ENCODE measurements at regions of chr6 and their contacts with region 1.

Region 1: GRCh38 chr6:52077180-52077884 is 10.1 kb downstream of the PKHD1 start:
- DNase-seq: peak in 1 of 2 experiments; percentile 59
- H3K4me3 ChIP-seq: peak overlapping the region in 2 of 4 experiments; percentile 27 to 32; a peak in 5 of 8 replicates
- H3K27ac ChIP-seq: 0 out of 2 replicates have a peak overlapping the region, but pooled peaks have one; percentile 34
- H3K4me1 ChIP-seq: peaks cover 2 to 17% (median 14%) of the 10 kb centered on the region in 4 experiments; a peak in 5 of 7 replicates
- H3K27me3 ChIP-seq: no peaks in the 10 kb centered on the region; a peak in 1 of 7 replicates
- CTCF ChIP-seq: no peak
- EP300 ChIP-seq: 0 out of 3 replicates have a peak, but pooled peaks of 1 of the 2 experiments have one; percentile 11
- POLR2A ChIP-seq: no peak
- RAD21 ChIP-seq: no peak; a peak in 1 of 4 replicates

Region 2: DNA sequence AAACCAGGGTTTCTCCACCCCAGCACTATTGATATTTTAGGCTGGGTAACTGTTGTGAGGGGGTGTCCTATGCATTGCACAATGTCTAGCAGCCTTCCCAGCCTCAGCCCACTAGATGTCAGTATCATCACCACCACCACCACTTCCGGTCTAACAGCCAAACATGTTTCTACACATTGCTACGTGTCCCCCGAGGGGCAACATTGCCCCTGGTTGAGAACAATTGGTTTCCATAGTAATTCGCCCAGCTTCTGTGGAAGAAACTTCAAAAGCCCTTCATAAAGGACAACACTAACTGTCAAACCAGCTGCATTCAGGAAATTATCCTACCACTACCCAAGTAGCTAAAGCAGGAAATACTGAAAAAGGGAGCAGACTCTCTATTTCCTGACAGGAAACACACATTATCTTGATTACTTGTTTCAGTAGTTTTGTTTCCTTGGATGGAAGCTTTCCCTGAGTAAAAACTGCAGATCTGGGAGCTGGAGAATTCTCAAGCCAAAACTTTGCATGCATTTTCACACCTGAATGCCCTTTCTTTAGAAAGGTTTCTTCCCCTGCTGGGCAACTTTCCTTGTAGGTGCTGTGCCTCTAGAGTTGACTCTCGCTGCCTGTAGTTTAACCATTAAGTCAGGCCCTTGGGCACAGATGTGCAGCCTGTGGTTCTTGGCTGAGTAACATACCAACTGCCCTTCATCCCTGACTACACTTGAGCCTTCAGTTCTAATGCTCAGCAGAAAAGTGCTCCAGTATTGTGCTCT is 13.6 kb before region 1 on chr6:
- CTCF ChIA-PET with region 1: interaction called, 17 read pairs
- POLR2A ChIA-PET with region 1: interaction called, 3 read pairs
- DNase-seq: peak in 1 of 2 experiments; percentile 15
- H3K4me3 ChIP-seq: no peak overlapping the region
- H3K27ac ChIP-seq: no peak overlapping the region; the same call in 1 of the 2 replicates
- H3K4me1 ChIP-seq: peaks cover 0 to 16% (median 7%) of the 10 kb centered on the region in 4 experiments; a peak in 5 of 7 replicates
- H3K27me3 ChIP-seq: no peaks in the 10 kb centered on the region
- CTCF ChIP-seq: peak; percentile 67 to 76 (median 70)
- EP300 ChIP-seq: no peak
- POLR2A ChIP-seq: no peak
- RAD21 ChIP-seq: peak; percentile 76 to 82

Region 3: GRCh38 chr6:52087498-52087999 is 10.2 kb after region 1 on chr6 and contains the start of gene PKHD1:
- CTCF ChIA-PET with region 1: interaction called, 12 read pairs
- POLR2A ChIA-PET with region 1: no interaction called
- DNase-seq: no peak
- H3K4me3 ChIP-seq: no peak within 1 kb of the TSS
- H3K27ac ChIP-seq: no peak within 1 kb of the TSS
- H3K4me1 ChIP-seq: no peaks in the 10 kb centered on the region
- H3K27me3 ChIP-seq: no peaks in the 10 kb centered on the region
- CTCF ChIP-seq: peak in 2 of 3 experiments; percentile 40 to 73; a peak in 3 of 4 replicates
- EP300 ChIP-seq: no peak
- POLR2A ChIP-seq: no peak
- RAD21 ChIP-seq: peak; percentile 41 to 56
- total RNA-seq, gene PKHD1: 0.09 and 0.11 TPM in 2 replicates